K562 (cell line): ENCODE measurements at regions of chr4 and their contacts with region 1.

Region 1: GRCh38 chr4:73662709-73663546 is 42.7 kb upstream of the RASSF6 start:
- DNase-seq: peak in 3 of 4 experiments; percentile 19 to 58 (median 51)
- ATAC-seq: peak; percentile 89
- H3K4me3 ChIP-seq: no peak overlapping the region
- H3K27ac ChIP-seq: no peak overlapping the region
- H3K4me1 ChIP-seq: no peaks in the 10 kb centered on the region; a peak in 1 of 5 replicates
- H3K27me3 ChIP-seq: no peaks in the 10 kb centered on the region
- CTCF ChIP-seq: peak; percentile 48 to 81 (median 61); a peak in 5 of 6 replicates
- EP300 ChIP-seq: no peak
- POLR2A ChIP-seq: no peak
- RAD21 ChIP-seq: peak; percentile 87 to 89

Region 2: DNA sequence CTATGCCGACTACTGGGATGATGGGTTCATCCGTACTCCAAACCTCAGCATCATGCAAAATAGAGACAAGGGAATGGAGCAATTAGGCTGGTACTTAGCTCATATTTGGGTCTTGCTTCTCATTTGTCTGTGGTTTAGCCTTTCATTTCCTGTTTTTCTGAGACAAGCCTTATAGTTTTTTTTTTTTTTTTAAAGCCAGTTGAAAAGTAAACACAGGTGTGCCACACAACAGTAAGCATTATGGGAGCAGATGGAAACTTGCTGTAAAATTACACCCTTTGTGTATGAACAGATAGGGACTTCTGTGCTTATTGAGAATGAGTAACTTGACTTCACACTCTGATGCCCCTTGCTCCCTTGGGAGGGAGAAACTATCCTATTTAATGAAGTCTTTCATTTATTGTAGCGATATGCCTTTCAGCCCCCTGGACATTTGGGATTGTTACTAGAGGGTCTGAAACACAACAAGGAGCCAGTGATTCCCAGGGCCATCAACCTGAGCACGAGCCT is 56.4 kb before region 1 on chr4:
- CTCF ChIA-PET with region 1: no interaction called
- POLR2A ChIA-PET with region 1: no interaction called
- in situ Hi-C with region 1: no loop called
- intact Hi-C with region 1: no loop called
- DNase-seq: no peak
- ATAC-seq: no peak
- H3K4me3 ChIP-seq: no peak overlapping the region
- H3K27ac ChIP-seq: no peak overlapping the region
- H3K4me1 ChIP-seq: no peaks in the 10 kb centered on the region
- H3K27me3 ChIP-seq: peaks cover 0 to 4% of the 10 kb centered on the region in 2 experiments; a peak in 1 of 5 replicates
- CTCF ChIP-seq: no peak
- EP300 ChIP-seq: no peak
- POLR2A ChIP-seq: no peak
- RAD21 ChIP-seq: no peak

Region 3: DNA sequence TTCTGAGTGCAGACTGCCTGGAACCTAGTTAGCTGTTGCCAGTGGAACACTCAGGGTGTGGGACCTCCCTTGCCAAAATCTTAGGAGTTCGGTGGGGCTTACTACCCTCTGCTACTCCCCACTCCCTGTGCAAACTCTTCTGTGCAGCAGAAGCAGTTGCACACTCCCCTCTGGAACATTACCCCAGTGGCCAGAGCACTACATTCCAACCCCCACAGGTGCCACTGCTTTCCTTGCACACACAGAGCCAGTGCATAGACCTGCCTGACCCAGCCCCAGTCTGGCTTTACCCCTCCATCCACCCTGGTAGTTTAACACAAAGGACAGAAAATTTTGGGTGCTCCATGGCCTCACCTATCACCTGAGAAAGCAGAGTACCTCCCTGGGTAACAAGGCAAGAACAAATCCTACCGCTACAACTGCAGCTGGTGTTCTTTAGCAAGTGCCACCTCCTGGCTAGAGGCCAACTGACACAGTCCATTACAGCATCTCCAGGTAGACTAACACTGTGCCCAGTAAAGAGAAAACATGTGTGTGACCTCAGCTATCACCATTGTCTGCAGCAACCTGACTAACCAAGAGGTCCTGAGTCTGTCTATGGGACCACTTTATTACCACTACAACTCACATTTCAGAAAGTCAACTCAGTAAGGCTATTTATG is 31.2 kb before region 1 on chr4:
- CTCF ChIA-PET with region 1: no interaction called
- POLR2A ChIA-PET with region 1: no interaction called
- in situ Hi-C with region 1: no loop called
- intact Hi-C with region 1: no loop called
- DNase-seq: no peak
- ATAC-seq: no peak
- H3K4me3 ChIP-seq: no peak overlapping the region
- H3K27ac ChIP-seq: no peak overlapping the region
- H3K4me1 ChIP-seq: no peaks in the 10 kb centered on the region
- H3K27me3 ChIP-seq: no peaks in the 10 kb centered on the region
- CTCF ChIP-seq: no peak
- EP300 ChIP-seq: no peak
- POLR2A ChIP-seq: no peak
- RAD21 ChIP-seq: no peak

Region 4: GRCh38 chr4:73729534-73730165 is 66.7 kb after region 1 on chr4:
- CTCF ChIA-PET with region 1: no interaction called
- POLR2A ChIA-PET with region 1: no interaction called
- in situ Hi-C with region 1: no loop called
- intact Hi-C with region 1: loop called (anchors 5 kb)
- DNase-seq: peak; percentile 50 to 74 (median 62)
- ATAC-seq: peak; percentile 95
- H3K4me3 ChIP-seq: no peak overlapping the region
- H3K27ac ChIP-seq: no peak overlapping the region
- H3K4me1 ChIP-seq: peaks cover 0 to 25% of the 10 kb centered on the region in 2 experiments; a peak in 4 of 5 replicates
- H3K27me3 ChIP-seq: no peaks in the 10 kb centered on the region
- CTCF ChIP-seq: peak; percentile 70 to 85 (median 80)
- EP300 ChIP-seq: no peak
- POLR2A ChIP-seq: no peak
- RAD21 ChIP-seq: peak; percentile 72 to 79

Region 5: DNA sequence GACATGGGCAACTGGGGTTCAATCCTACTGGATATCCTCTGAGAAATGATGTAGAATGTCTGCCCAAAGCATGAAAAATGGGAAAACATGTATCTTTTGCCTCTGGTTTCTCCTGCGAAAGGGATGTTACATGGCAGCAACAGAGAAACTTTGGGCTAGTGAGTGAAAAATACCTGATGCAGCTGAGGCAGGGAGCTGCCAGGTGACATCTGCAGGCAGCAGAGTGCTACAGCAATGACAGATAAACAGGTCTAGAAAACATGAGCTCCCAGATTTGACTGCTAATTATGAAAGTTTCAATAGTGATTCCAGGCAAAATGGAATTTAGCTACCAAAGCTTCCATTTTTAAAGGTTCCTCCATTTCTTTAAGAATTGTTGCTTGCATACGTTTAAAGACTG is 201.4 kb after region 1 on chr4:
- CTCF ChIA-PET with region 1: interaction called, 5 read pairs
- POLR2A ChIA-PET with region 1: no interaction called
- in situ Hi-C with region 1: no loop called
- intact Hi-C with region 1: loop called (anchors 1 kb)
- DNase-seq: peak in 2 of 4 experiments; percentile 46 to 56
- ATAC-seq: peak; percentile 64
- H3K4me3 ChIP-seq: no peak overlapping the region
- H3K27ac ChIP-seq: no peak overlapping the region
- H3K4me1 ChIP-seq: peaks cover 7 to 9% of the 10 kb centered on the region in 2 experiments; a peak in 4 of 5 replicates
- H3K27me3 ChIP-seq: no peaks in the 10 kb centered on the region
- CTCF ChIP-seq: peak; percentile 72 to 73 (median 72)
- EP300 ChIP-seq: no peak
- POLR2A ChIP-seq: no peak
- RAD21 ChIP-seq: peak; percentile 69 to 76

Region 6: GRCh38 chr4:74038161-74039064 is 375.5 kb after region 1 on chr4 and contains the start of gene CXCL3:
- CTCF ChIA-PET with region 1: no interaction called
- POLR2A ChIA-PET with region 1: no interaction called
- in situ Hi-C with region 1: loop called (anchors 10 kb)
- intact Hi-C with region 1: loop called (anchors 5 kb)
- DNase-seq: peak; percentile 82 to 88 (median 84)
- ATAC-seq: peak; percentile 89
- H3K4me3 ChIP-seq: peak within 1 kb of the TSS; percentile 55
- H3K27ac ChIP-seq: peak within 1 kb of the TSS; percentile 88
- H3K4me1 ChIP-seq: peaks cover 3 to 16% of the 10 kb centered on the region in 2 experiments; a peak in 3 of 5 replicates
- H3K27me3 ChIP-seq: no peaks in the 10 kb centered on the region
- CTCF ChIP-seq: peak; percentile 17 to 65 (median 53)
- EP300 ChIP-seq: no peak
- POLR2A ChIP-seq: peak; percentile 84
- RAD21 ChIP-seq: peak; percentile 64 to 68
- polyA plus RNA-seq, gene CXCL3: 2.3 to 5.0 TPM

Region 7: DNA sequence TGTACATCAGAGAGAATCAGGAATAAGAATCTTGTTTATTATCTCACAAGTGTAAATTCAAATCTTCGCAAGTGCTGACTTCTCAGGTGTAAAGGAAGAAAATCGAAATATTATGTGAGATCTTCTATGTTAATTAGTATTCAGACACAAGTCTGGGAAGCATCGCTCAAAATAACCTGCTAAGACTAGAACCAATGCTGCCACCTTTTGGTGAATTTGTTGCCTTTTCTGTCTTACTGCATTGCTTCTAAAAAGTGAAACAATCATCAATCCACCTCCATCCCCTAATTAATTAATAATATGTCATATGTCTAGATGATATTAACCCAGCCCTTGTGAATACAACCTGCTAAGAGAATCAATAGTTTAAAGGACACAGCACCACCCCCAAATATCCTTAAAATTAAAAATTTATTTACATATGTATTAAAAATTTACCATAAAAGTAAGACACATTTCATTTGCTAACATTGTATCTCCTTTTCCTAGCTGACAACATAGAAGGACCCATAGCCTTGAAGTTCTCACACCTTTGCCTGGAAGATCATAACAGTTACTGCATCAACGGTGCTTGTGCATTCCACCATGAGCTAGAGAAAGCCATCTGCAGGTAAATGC is 648.9 kb after region 1 on chr4:
- CTCF ChIA-PET with region 1: interaction called, 3 read pairs
- POLR2A ChIA-PET with region 1: no interaction called
- in situ Hi-C with region 1: no loop called
- intact Hi-C with region 1: loop called (anchors 5 kb)
- DNase-seq: peak in 1 of 4 experiments; percentile 67
- ATAC-seq: peak; percentile 76
- H3K4me3 ChIP-seq: no peak overlapping the region
- H3K27ac ChIP-seq: no peak overlapping the region
- H3K4me1 ChIP-seq: no peaks in the 10 kb centered on the region; a peak in 1 of 5 replicates
- H3K27me3 ChIP-seq: no peaks in the 10 kb centered on the region
- CTCF ChIP-seq: peak; percentile 50 to 81 (median 59); a peak in 5 of 6 replicates
- EP300 ChIP-seq: no peak
- POLR2A ChIP-seq: no peak
- RAD21 ChIP-seq: peak; percentile 78 to 83